ENCODE measurements at regions of chr16 and their contacts with region 1.

Region 1: DNA sequence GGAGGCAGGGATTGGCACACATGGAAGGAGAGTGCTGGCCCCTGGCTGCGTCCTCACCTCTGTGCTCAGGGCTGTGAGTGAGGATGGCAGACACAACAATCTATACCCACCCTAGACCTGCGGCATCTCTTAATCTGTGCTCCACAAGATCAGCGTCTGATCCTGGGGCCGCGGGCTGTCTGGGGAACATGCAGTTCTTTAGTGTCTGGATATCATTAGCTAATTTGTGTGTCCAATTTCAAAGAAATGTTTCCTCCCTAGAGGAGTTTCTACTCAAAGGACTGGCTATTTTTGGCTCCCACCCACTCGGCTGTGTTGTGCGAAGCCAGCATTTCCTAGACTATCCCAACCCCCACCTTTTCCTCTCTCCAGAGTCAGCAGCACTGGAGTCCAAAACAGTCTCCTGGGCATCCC is 93.8 kb downstream of the GRIN2A start:
- DNase-seq: no peak
- ATAC-seq: no peak
- H3K4me3 ChIP-seq: no peak overlapping the region
- H3K27ac ChIP-seq: no peak overlapping the region
- H3K4me1 ChIP-seq: no peaks in the 10 kb centered on the region
- H3K27me3 ChIP-seq: no peaks in the 10 kb centered on the region
- CTCF ChIP-seq: no peak
- POLR2A ChIP-seq: no peak

Region 2: GRCh38 chr16:10136916-10137315 is 48.5 kb after region 1 on chr16:
- intact Hi-C with region 1: loop called in 1 of 2 experiments (anchors 5 kb)
- DNase-seq: no peak
- ATAC-seq: no peak
- H3K4me3 ChIP-seq: no peak overlapping the region
- H3K27ac ChIP-seq: no peak overlapping the region
- H3K4me1 ChIP-seq: no peaks in the 10 kb centered on the region
- H3K27me3 ChIP-seq: no peaks in the 10 kb centered on the region
- CTCF ChIP-seq: no peak
- POLR2A ChIP-seq: no peak

Region 3: GRCh38 chr16:10162981-10163380 is 74.6 kb after region 1 on chr16:
- intact Hi-C with region 1: no loop called
- DNase-seq: no peak
- ATAC-seq: no peak
- H3K4me3 ChIP-seq: no peak overlapping the region
- H3K27ac ChIP-seq: no peak overlapping the region
- H3K4me1 ChIP-seq: no peaks in the 10 kb centered on the region
- H3K27me3 ChIP-seq: no peaks in the 10 kb centered on the region
- CTCF ChIP-seq: no peak
- POLR2A ChIP-seq: no peak

Measured in right lobe of liver (tissue), 6 donors.